Activated T-helper 2 cell treated with anti-CD3 and anti-CD28 coated beads, Interferon-gamma antibody, Interleukin-2, Interleukin-4, amounts not matched to agents 10 μg/mL and 5 μg/mL and 100 μg/mL, durations not matched to agents 14 hours and 24 hours and 36 hours (primary cell): ENCODE measurements at regions of chr20 and their contacts with region 1.

Region 1: DNA sequence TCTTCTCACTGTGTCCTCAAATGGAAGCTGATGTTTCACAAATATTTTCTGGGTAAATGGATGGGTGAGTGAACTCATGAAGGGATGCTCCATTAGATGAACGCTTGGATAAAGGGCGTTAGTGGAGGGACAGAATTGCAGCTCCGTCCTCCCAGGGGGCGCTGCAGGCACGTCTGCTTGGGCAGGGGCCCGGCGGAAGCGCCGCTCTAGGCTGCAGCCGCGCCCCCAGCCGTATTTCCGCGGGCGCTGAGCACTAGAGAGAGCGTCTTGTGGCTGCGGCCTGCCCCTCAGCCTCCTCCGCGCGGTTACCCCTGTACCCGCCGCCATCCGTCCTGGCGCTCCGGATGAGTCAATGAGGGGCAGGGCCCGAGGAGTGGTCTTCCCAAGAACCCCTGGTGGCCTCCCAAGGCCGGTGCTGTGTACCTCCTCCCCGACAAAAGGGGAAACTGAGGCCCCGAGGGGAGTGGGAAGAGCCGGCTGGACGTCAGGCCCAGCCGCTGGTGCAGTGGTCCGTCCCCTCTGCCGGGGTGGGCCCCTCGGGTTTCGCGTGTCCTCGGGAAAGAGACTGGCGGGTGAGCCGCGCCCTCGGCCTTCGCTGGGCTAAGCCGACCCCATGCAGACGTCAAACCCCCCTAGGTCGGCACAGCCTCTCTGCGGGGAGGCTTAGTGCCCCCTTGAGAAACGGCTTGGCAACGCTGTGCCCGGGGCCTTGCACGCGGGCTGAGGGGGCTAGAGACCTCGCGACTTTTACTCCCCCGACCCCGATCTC is 11.5 kb upstream of the SNHG17 start:
- DNase-seq: peak; percentile 88
- H3K4me3 Mint-ChIP-seq: peak overlapping the region; percentile 74
- H3K27ac Mint-ChIP-seq: peak overlapping the region; percentile 73
- H3K4me1 Mint-ChIP-seq: peaks cover 41% of the 10 kb centered on the region
- H3K27me3 Mint-ChIP-seq: peaks cover 9% of the 10 kb centered on the region

Region 2: GRCh38 chr20:38434743-38435554 is 11.7 kb before region 1 on chr20 and contains the start of gene SNHG17:
- intact Hi-C with region 1: loop called (anchors 1 kb)
- DNase-seq: peak; percentile 86
- H3K4me3 Mint-ChIP-seq: peak within 1 kb of the TSS; percentile 90
- H3K27ac Mint-ChIP-seq: peak within 1 kb of the TSS; percentile 93
- H3K4me1 Mint-ChIP-seq: peaks cover 24% of the 10 kb centered on the region
- H3K27me3 Mint-ChIP-seq: peaks cover 2% of the 10 kb centered on the region
- total RNA-seq, gene SNHG17: 78.7 and 83.7 TPM in 2 replicates

Region 3: DNA sequence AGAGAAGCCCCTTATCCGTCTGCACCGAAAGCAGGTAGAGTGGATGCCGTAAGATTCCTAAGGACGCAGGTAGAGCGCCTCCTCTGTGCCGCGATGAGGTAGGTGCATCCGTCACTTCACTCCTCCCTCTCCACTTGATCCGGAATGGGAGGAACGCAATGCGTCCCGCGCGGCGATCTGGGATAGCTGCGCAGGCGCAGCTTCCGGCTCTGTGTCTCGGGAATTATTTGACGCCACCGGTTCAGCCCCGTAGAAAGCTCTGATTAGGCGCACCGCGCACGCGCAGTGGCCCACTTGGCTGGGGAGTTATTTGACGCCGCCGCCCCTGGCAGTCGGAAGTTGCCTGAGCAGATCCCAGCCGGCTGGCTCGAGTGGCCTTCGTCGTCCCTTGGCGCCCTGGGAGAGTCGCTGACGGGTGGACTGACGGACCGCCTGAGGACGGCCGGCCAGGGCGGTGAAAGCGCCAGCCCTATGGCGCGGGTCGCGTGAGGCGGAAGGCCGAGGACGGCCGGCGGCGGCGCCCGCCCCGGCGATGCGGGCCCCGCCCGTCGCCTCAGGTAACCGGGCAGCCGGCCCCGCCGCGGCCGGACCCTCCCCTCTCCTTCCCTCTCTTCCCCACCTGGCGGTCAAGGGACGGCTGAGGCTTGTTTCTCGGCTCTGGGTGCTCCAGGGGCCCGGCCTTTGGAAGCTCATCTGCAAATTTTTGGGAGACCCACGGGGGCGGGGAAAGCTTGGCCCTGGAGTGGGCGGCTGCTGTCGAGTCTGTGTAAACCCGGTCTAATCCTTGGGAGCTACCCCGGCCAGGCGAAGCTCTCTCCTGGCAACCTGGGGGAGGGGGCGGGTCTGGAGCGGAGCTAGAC is 26.1 kb after region 1 on chr20 and contains the start of gene RALGAPB:
- intact Hi-C with region 1: loop called (anchors 1 kb)
- DNase-seq: peak; percentile 98
- H3K4me3 Mint-ChIP-seq: peak within 1 kb of the TSS; percentile 84
- H3K27ac Mint-ChIP-seq: peak within 1 kb of the TSS; percentile 67
- H3K4me1 Mint-ChIP-seq: peaks cover 24% of the 10 kb centered on the region
- H3K27me3 Mint-ChIP-seq: peaks cover 5% of the 10 kb centered on the region
- total RNA-seq, gene RALGAPB: 30.0 and 33.1 TPM in 2 replicates

Region 4: GRCh38 chr20:38649275-38649891 is 202.8 kb after region 1 on chr20:
- intact Hi-C with region 1: no loop called
- DNase-seq: no peak
- H3K4me3 Mint-ChIP-seq: no peak overlapping the region
- H3K27ac Mint-ChIP-seq: no peak overlapping the region
- H3K4me1 Mint-ChIP-seq: peaks cover 7% of the 10 kb centered on the region
- H3K27me3 Mint-ChIP-seq: peaks cover 26% of the 10 kb centered on the region

Region 5: GRCh38 chr20:38997622-38998021 is 551.0 kb after region 1 on chr20:
- intact Hi-C with region 1: no loop called
- DNase-seq: peak; percentile 39
- H3K4me3 Mint-ChIP-seq: peak overlapping the region; percentile 38
- H3K27ac Mint-ChIP-seq: peak overlapping the region; percentile 63
- H3K4me1 Mint-ChIP-seq: peaks cover 28% of the 10 kb centered on the region
- H3K27me3 Mint-ChIP-seq: no peaks in the 10 kb centered on the region